ENCODE measurements at regions of chr12 and their contacts with region 1.

Region 1: DNA sequence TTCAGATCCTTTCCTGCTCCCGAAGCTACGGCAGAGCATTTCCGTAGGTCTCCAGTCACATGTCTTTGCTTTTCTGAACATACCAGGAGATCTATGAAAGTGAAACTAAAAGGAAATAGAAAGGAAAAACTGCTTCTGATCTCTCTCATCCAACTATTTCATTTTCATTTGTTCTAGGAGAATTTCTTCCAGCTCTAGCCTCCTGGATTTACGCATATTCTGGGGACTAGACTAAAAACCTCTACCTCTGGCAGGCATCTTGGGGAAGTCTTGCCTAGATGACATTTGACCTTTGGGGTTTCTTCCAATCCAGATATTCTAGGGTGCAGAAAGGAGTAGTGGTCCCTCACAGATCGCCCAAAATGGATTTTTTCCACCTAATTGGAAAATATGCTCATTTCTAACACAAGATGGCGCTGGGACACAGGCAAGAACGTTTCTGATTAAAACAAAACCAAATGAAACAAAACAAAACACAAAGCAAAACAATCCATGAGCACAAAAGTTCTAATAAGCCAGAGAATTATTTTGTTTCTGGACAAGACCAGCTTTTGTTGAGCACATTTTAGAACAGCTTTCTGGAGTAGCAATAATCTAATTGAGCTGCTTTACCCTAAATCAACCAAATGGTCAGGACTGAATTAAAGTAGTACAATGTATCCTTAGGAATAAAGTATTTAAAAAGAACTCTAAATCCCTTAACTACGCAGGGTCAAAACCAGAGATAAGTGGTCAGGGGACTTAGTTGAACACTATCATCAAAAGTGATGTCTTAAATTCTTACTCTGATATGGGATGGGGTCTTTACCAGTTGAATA is 12.3 kb upstream of the PARP11 start:
- DNase-seq: no peak

Region 2: GRCh38 chr12:4037747-4038312 is 152.3 kb after region 1 on chr12:
- intact Hi-C with region 1: loop called (anchors 2 to 5 kb)
- DNase-seq: no peak

Region 3: GRCh38 chr12:4287325-4288211 is 402.1 kb after region 1 on chr12:
- intact Hi-C with region 1: loop called in 1 of 2 experiments (anchors 10 kb)
- DNase-seq: no peak

Measured in posterior vena cava (tissue), 2 donors.